ENCODE measurements at regions of chr15 and their contacts with region 1.

Region 1: DNA sequence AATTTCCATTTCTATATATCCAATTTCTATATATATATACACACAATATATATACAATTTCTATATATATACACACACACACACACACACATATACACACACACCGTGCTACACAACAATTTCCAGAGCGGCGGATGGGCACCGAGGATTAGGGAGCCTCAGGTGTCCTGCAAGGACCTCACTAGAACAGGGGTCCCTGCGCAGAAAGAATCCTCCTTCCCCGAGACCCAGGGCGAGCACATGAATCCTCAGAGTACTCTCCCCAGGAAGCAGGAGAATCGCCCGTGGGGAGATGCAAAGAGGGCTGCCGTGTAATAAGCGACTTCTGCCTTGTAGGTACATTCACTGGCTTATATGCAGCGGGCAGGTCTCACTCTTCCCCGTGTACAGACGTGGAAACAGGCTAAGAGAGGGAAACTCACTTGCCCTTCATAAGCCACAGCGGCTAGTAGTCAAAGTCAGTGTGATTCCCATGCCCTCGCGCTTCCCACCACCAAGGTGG is 467 bp downstream of the PIF1 start:
- DNase-seq: no peak
- ATAC-seq: peak; percentile 5 to 57 (median 41)
- H3K4me3 ChIP-seq: peak overlapping the region; percentile 76
- H3K27ac ChIP-seq: no peak overlapping the region
- H3K4me1 ChIP-seq: peaks cover 14% of the 10 kb centered on the region
- H3K27me3 ChIP-seq: no peaks in the 10 kb centered on the region
- CTCF ChIP-seq: no peak

Region 2: DNA sequence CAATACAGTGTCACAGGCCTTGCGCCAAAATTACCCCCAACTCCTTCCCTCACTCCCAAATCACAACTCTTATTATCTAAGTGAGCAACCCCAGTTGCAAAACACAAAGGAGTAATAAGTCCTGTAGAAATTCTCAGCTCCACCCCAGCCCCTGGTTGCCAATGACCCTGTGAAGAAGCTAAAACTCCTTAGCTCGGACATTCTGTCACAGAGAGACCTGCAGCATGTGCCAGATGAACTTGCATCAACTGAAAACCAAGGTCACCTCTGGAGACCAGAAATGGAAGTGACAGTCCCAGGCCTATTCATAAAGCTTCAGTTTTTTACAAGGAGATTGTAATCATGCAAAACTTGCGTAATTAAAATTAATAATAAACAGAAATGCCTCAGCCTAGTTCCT is 104.8 kb before region 1 on chr15:
- intact Hi-C with region 1: no loop called
- DNase-seq: no peak
- ATAC-seq: peak in 3 of 4 donors; percentile 52 to 87 (median 73)
- H3K4me3 ChIP-seq: no peak overlapping the region
- H3K27ac ChIP-seq: no peak overlapping the region
- H3K4me1 ChIP-seq: peaks cover 6% of the 10 kb centered on the region
- H3K27me3 ChIP-seq: no peaks in the 10 kb centered on the region
- CTCF ChIP-seq: no peak

Region 3: GRCh38 chr15:64774629-64775493 is 50.1 kb before region 1 on chr15:
- intact Hi-C with region 1: loop called in 1 of 2 experiments (anchors 5 kb)
- DNase-seq: peak in 1 of 2 donors; percentile 33
- ATAC-seq: peak; percentile 30 to 58 (median 44)
- H3K4me3 ChIP-seq: peak overlapping the region; percentile 67
- H3K27ac ChIP-seq: peak overlapping the region; percentile 16
- H3K4me1 ChIP-seq: no peaks in the 10 kb centered on the region
- H3K27me3 ChIP-seq: peaks cover 0 to 32% (median 15%) of the 10 kb centered on the region in 3 donors
- CTCF ChIP-seq: no peak